ENCODE measurements at regions of chr7 and their contacts with region 1.

Region 1: DNA sequence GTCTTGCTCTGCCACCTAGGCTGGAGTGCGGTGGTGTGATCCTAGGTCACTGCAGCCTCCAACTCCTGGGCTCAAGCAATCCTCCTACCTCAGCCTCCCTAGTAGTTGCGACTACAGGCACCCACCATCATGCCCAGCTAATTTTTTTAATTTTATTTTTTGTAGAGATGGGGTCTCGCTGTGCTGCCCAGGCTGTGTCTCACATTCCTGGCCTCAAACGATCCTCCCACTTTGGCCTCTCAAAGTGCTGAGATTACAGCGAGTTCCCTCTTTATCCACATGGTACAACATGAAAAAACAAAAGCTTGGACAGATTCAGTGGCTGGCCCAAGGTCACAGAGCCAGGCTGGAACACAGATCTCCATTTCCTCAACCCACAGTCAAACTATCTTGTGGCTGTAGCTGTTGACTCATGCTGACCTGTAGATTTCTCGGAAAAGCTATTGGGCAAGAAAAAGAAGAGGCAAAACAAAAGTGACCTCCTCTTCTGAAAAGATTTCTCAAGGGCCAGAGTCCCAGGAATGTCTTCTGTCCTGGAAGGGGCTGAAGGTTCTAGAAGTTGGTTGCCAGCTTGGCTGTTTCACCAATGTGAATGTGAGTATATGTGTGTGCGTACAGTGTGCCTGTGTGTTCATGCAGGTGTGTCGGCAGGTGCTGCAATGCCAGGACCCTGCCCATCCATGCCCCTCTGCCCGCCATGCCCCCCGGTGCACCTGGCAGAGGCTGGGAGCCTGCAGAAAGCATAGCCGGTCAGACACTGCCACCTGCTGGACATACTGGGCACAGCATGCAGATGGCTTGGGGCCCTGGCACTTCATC is 28.4 kb downstream of the TMEM130 start:
- DNase-seq: peak; percentile 61 to 92 (median 78)
- ATAC-seq: peak; percentile 90 to 95 (median 91)
- H3K4me3 ChIP-seq: no peak overlapping the region
- H3K27ac ChIP-seq: peak overlapping the region in 3 of 4 donors; percentile 26 to 76 (median 65)
- H3K4me1 ChIP-seq: peaks cover 0 to 6% (median 0%) of the 10 kb centered on the region in 3 donors
- H3K27me3 ChIP-seq: no peaks in the 10 kb centered on the region
- CTCF ChIP-seq: peak; percentile 94 to 97 (median 96)

Region 2: DNA sequence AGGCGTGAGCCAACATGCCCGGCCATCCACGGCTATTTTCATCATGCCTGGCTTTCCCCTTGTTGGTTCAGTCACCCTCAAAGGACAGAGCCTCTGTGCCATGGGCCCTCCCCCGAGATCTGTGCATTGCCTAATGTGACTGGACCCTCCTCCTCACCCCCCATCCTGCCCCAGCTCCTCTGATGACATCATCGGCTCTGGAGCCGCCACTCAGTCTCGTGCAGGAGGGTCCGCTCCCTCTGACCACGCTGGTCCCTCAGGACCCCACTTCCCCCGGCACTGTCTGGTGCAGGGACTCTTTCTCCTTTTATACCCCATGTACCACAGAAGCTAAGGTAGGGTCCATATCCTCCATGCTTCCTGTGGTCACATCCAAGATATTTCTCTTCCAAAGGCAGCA is 407.3 kb before region 1 on chr7:
- intact Hi-C with region 1: loop called (anchors 5 to 10 kb)
- DNase-seq: no peak
- ATAC-seq: no peak
- H3K4me3 ChIP-seq: no peak overlapping the region
- H3K27ac ChIP-seq: no peak overlapping the region
- H3K4me1 ChIP-seq: no peaks in the 10 kb centered on the region
- H3K27me3 ChIP-seq: no peaks in the 10 kb centered on the region
- CTCF ChIP-seq: no peak

Region 3: GRCh38 chr7:98439484-98439883 is 401.9 kb before region 1 on chr7:
- intact Hi-C with region 1: loop called (anchors 5 to 10 kb)
- DNase-seq: no peak
- ATAC-seq: no peak
- H3K4me3 ChIP-seq: no peak overlapping the region
- H3K27ac ChIP-seq: no peak overlapping the region
- H3K4me1 ChIP-seq: no peaks in the 10 kb centered on the region
- H3K27me3 ChIP-seq: no peaks in the 10 kb centered on the region
- CTCF ChIP-seq: no peak

Region 4: GRCh38 chr7:98526059-98526458 is 315.3 kb before region 1 on chr7:
- intact Hi-C with region 1: no loop called
- DNase-seq: no peak
- ATAC-seq: no peak
- H3K4me3 ChIP-seq: no peak overlapping the region
- H3K27ac ChIP-seq: no peak overlapping the region
- H3K4me1 ChIP-seq: no peaks in the 10 kb centered on the region
- H3K27me3 ChIP-seq: no peaks in the 10 kb centered on the region
- CTCF ChIP-seq: no peak

Region 5: DNA sequence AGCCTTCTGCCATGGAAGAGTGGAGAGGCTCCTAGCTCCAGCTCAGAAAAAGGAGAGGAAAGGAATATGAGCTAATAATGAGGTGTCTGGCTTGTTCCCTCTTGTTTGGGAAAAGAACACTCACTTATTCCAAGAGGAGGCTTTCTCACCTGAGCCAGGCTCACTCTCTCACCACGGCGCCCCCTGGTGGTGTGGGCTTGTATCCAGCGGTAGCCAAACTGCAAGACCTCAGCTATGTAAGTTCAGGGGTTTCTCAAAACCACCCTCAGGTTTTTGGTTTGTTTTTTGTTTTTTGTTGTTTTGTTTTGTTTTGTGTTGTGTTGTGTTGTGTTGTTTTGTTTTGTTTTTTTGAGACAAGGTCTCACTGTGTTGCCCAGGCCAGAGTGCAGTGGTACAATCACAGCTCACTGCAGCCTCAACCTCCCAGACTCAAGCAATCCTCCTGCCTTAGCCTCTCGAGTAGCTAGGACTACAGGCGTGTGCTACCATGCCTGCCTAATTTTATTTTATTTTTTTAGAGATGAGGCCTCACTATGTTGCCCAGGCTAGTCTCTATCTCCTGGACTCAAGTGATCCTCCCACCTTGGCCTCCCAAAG is 95.6 kb before region 1 on chr7:
- intact Hi-C with region 1: loop called in 2 of 3 experiments (anchors 5 to 10 kb)
- DNase-seq: peak; percentile 67 to 100 (median 86)
- ATAC-seq: peak; percentile 73 to 96 (median 88)
- H3K4me3 ChIP-seq: no peak overlapping the region
- H3K27ac ChIP-seq: no peak overlapping the region
- H3K4me1 ChIP-seq: no peaks in the 10 kb centered on the region
- H3K27me3 ChIP-seq: no peaks in the 10 kb centered on the region
- CTCF ChIP-seq: peak; percentile 76 to 89 (median 81)

Region 6: DNA sequence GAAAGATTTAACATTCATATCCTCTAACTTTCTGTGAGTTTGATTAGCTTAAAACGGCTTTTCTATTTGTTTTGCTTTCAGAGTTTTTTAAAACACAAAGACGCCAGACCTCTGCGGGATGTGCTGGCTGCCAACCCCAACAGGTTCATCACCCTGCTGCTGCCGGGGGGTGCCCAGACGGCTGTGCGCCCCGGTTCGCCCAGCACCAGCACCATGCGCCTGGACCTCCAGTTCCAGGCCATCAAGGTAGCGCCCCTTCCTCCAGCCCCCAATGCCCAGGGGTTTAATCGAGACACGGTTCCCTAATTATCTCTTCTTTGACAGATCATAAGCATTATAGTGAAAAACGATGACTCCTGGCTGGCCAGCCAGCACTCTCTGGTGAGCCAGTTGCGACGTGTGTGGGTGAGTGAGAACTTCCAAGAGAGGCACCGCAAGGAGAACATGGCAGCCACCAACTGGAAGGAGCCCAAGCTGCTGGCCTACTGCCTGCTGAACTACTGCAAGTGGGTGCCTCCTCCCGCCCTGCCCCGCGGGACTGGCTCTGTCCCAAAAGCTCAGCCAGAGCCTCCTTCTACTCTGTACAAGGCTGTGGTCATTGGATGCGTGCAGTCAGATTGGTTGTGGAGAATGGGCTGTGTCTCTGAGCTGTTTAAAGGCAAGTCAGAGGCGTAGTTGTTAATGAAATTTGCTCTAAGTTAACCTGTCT is 108.1 kb after region 1 on chr7:
- intact Hi-C with region 1: no loop called
- DNase-seq: no peak
- ATAC-seq: no peak
- H3K4me3 ChIP-seq: no peak overlapping the region
- H3K27ac ChIP-seq: no peak overlapping the region
- H3K4me1 ChIP-seq: no peaks in the 10 kb centered on the region
- H3K27me3 ChIP-seq: no peaks in the 10 kb centered on the region
- CTCF ChIP-seq: no peak